Activated naive CD8-positive, alpha-beta T cell treated with anti-CD3 and anti-CD28 coated beads, Interleukin-2, amount 10 ng/mL, durations not matched to agents 7 days and 5 days (primary cell): ENCODE measurements at regions of chrX and their contacts with region 1.

Region 1: DNA sequence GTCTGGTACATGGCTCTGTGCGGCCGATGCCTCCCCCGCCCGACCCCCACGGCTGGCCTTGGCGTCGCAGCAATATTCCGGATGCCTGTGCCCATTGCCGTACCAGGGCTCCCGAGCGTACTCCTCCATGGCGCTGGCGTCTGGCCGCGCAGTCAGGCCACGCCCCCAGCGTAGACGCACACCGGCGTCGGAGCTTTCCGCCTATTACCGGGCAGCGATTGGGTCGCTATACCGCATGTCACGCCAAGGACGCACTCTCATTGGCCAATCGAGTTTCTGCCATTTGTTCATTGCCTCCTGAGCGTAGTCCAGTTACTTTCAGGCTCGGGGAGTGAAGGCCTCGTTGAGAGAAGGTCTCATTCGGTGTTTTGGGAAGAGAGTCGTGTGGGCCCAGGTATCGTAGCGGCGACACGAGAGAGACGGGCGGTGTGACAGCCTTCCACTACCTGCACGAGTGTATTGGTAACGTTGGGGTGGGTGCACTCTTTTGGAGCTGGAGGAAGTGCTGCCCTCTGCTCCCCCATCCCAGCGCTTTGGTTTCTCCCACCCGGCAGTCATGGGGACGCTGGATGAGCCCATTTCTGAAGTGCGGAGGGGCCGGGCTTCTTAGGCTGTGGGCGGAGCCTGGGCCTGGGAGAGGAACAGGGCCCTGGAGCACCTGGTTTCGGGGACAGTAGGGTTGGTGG is at the starts of genes PQBP1 and TIMM17B:
- DNase-seq: peak; percentile 85
- ATAC-seq: peak; percentile 92
- H3K4me3 Mint-ChIP-seq: peak within 1 kb of the TSS; percentile 99
- H3K27ac Mint-ChIP-seq: peak within 1 kb of the TSS; percentile 100
- H3K4me1 Mint-ChIP-seq: peaks cover 8% of the 10 kb centered on the region
- H3K27me3 Mint-ChIP-seq: no peaks in the 10 kb centered on the region
- total RNA-seq, gene PQBP1: 58.2 to 61.0 TPM
- total RNA-seq, gene TIMM17B: 39.2 to 44.5 TPM

Region 2: GRCh38 chrX:48911412-48912182 is 13.8 kb after region 1 on chrX and contains the start of gene SLC35A2:
- POLR2A ChIA-PET with region 1: interaction called, 21 read pairs
- DNase-seq: peak; percentile 87
- ATAC-seq: peak; percentile 85
- H3K4me3 Mint-ChIP-seq: peak within 1 kb of the TSS; percentile 93
- H3K27ac Mint-ChIP-seq: peak within 1 kb of the TSS; percentile 93
- H3K4me1 Mint-ChIP-seq: peaks cover 26% of the 10 kb centered on the region
- H3K27me3 Mint-ChIP-seq: no peaks in the 10 kb centered on the region
- total RNA-seq, gene SLC35A2: 12.7 to 14.1 TPM

Region 3: GRCh38 chrX:48992341-48992740 is 94.6 kb after region 1 on chrX:
- POLR2A ChIA-PET with region 1: no interaction called
- DNase-seq: no peak
- ATAC-seq: no peak
- H3K4me3 Mint-ChIP-seq: no peak overlapping the region
- H3K27ac Mint-ChIP-seq: no peak overlapping the region
- H3K4me1 Mint-ChIP-seq: peaks cover 3% of the 10 kb centered on the region
- H3K27me3 Mint-ChIP-seq: no peaks in the 10 kb centered on the region